Activated CD4-positive, alpha-beta T cell treated with anti-CD3 and anti-CD28 coated beads, Interleukin-2, amount 10 ng/mL, durations not matched to agents 7 days and 5 days (primary cell): ENCODE measurements at regions of chr17 and their contacts with region 1.

Region 1: GRCh38 chr17:59440784-59441441 is 109.5 kb downstream of the YPEL2 start:
- DNase-seq: peak; percentile 94
- H3K4me3 Mint-ChIP-seq: peak overlapping the region; percentile 37
- H3K27ac Mint-ChIP-seq: peak overlapping the region; percentile 90
- H3K4me1 Mint-ChIP-seq: peaks cover 56% of the 10 kb centered on the region
- H3K27me3 Mint-ChIP-seq: no peaks in the 10 kb centered on the region

Region 2: GRCh38 chr17:59199398-59199797 is 241.5 kb before region 1 on chr17:
- CTCF ChIA-PET with region 1: no interaction called
- POLR2A ChIA-PET with region 1: no interaction called
- DNase-seq: no peak
- H3K4me3 Mint-ChIP-seq: no peak overlapping the region
- H3K27ac Mint-ChIP-seq: peak overlapping the region; percentile 46
- H3K4me1 Mint-ChIP-seq: no peaks in the 10 kb centered on the region
- H3K27me3 Mint-ChIP-seq: no peaks in the 10 kb centered on the region

Region 3: DNA sequence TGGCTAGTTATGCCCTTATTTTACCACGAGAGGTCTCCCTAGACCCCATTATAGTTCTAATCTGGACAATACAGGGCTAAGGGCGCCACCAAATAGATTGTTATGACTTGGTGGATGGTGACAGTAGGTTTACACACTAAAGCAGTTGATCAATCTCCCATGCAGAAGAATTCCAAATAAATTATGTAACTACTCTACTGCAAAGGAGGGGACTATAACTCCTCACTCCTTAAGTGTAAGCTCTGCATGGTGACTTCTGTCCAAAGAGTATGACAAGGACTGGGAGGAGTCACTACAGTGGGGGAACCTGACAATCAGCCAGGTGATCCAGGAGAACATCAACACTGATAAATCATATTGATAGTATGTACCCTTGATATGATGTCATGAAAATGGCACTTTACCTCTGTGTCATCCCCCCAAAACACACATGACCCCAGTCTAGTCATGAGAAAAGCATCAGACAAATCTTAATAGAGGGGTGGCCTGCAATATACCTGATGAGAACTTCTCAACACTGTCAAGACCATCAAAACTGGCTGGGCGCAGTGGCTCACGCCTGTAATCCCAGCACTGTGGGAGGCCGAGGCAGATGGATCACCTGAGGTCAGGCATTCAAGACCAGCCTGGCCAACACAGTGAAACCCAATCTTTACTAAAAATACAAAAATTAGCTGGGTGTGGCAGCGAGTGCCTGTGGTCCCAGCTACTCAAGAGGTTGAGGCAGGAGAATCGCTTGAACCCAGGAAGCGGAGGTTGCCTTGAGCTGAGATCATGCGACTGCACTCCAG is 129.6 kb before region 1 on chr17:
- CTCF ChIA-PET with region 1: interaction called, 59 read pairs
- POLR2A ChIA-PET with region 1: no interaction called
- DNase-seq: peak; percentile 63
- H3K4me3 Mint-ChIP-seq: no peak overlapping the region
- H3K27ac Mint-ChIP-seq: no peak overlapping the region
- H3K4me1 Mint-ChIP-seq: peaks cover 7% of the 10 kb centered on the region
- H3K27me3 Mint-ChIP-seq: peaks cover 1% of the 10 kb centered on the region

Region 4: DNA sequence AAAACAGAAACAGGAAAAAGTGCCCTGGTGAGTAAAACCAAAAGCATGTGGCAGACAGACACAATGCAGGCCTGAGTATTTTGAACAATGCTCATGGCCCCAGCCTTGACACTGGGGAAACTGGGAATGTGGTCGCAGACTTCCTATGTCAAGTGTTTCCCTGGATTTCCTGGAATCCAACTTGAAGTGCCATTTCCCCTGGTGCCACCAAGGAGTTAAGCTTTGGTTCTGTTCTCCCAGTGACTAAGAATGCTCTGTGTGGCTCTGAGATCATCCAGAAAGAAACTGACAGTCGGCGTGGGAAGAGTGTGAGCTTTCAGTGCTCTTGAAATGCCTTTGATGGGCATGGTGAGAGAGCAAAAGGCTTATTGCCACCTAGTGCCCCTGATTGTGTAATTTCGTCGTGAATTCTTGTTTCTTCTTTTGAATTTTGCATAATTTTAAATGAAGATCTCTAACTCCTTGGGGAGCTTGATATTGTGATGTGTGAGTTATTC is 13.4 kb before region 1 on chr17:
- CTCF ChIA-PET with region 1: interaction called, 10 read pairs
- POLR2A ChIA-PET with region 1: no interaction called
- DNase-seq: peak; percentile 18
- H3K4me3 Mint-ChIP-seq: no peak overlapping the region
- H3K27ac Mint-ChIP-seq: no peak overlapping the region
- H3K4me1 Mint-ChIP-seq: peaks cover 18% of the 10 kb centered on the region
- H3K27me3 Mint-ChIP-seq: peaks cover 4% of the 10 kb centered on the region